ENCODE measurements at regions of chrX and their contacts with region 1.

Region 1: GRCh38 chrX:1391707-1392375 is at the start of gene SLC25A6:
- DNase-seq: peak; percentile 98 to 100 (median 99)
- ATAC-seq: peak; percentile 95
- H3K4me3 ChIP-seq: peak within 1 kb of the TSS; percentile 84
- H3K4me3 Mint-ChIP-seq: peak within 1 kb of the TSS; percentile 92
- H3K27ac ChIP-seq: peak within 1 kb of the TSS; percentile 87 to 98
- H3K27ac Mint-ChIP-seq: peak within 1 kb of the TSS; percentile 85
- H3K4me1 ChIP-seq: peaks cover 48% of the 10 kb centered on the region
- H3K4me1 Mint-ChIP-seq: peaks cover 42% of the 10 kb centered on the region
- H3K27me3 ChIP-seq: peaks cover 0 to 2% of the 10 kb centered on the region in 2 experiments
- H3K27me3 Mint-ChIP-seq: no peaks in the 10 kb centered on the region
- CTCF ChIP-seq: peak; percentile 28
- total RNA-seq, gene SLC25A6: 338 to 340 TPM

Region 2: DNA sequence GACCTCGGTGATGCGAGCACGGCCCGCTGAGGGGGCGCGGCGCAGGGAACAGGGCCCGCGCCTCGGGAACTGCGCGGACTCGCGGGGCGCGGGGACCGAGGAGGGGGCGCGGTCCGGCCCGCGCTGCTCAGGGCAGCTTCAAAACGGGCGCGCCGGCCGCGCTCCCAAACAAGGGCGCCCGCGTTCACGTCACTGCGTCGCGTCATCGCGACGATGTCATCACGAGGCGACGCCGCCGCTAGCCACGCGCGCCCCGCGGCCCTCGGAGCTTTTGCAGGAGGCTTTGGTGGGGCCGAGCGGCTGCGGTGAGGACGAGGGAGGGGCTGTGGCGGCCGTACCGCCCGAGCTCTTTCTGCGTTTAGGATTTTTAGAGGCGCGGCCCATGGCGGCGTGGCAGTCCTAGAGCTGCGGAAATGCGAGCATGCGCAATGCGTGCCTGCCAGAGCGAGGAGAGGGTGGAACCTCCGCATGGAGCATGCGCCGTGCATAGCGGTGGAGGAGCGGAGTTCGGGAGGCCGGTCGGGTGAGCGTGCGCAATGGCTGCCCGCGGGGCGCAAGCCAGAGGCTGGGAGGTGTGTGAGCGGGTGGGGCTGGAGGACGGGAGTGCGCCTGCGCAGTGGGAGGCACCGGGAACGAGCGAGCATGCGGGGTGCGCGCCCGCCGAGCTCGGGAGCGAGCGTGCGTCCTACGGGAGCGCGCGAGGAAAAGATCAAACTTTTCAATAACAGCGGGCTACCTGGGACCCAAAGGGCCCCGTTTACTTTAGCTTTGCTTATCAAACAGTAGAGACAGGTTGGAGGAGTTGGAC is 1004.9 kb before region 1 on chrX and contains the start of gene PPP2R3B:
- CTCF ChIA-PET with region 1: no interaction called
- POLR2A ChIA-PET with region 1: no interaction called
- intact Hi-C with region 1: loop called in 1 of 2 experiments (anchors 10 kb)
- DNase-seq: peak; percentile 95 to 100 (median 99)
- ATAC-seq: peak; percentile 93
- H3K4me3 ChIP-seq: peak within 1 kb of the TSS; percentile 82
- H3K4me3 Mint-ChIP-seq: peak within 1 kb of the TSS; percentile 87
- H3K27ac ChIP-seq: peak within 1 kb of the TSS; percentile 100
- H3K27ac Mint-ChIP-seq: peak within 1 kb of the TSS; percentile 94
- H3K4me1 ChIP-seq: peaks cover 16% of the 10 kb centered on the region
- H3K4me1 Mint-ChIP-seq: peaks cover 9% of the 10 kb centered on the region
- H3K27me3 ChIP-seq: no peaks in the 10 kb centered on the region
- H3K27me3 Mint-ChIP-seq: no peaks in the 10 kb centered on the region
- CTCF ChIP-seq: no peak
- total RNA-seq, gene PPP2R3B: 12.1 to 14.0 TPM

Region 3: DNA sequence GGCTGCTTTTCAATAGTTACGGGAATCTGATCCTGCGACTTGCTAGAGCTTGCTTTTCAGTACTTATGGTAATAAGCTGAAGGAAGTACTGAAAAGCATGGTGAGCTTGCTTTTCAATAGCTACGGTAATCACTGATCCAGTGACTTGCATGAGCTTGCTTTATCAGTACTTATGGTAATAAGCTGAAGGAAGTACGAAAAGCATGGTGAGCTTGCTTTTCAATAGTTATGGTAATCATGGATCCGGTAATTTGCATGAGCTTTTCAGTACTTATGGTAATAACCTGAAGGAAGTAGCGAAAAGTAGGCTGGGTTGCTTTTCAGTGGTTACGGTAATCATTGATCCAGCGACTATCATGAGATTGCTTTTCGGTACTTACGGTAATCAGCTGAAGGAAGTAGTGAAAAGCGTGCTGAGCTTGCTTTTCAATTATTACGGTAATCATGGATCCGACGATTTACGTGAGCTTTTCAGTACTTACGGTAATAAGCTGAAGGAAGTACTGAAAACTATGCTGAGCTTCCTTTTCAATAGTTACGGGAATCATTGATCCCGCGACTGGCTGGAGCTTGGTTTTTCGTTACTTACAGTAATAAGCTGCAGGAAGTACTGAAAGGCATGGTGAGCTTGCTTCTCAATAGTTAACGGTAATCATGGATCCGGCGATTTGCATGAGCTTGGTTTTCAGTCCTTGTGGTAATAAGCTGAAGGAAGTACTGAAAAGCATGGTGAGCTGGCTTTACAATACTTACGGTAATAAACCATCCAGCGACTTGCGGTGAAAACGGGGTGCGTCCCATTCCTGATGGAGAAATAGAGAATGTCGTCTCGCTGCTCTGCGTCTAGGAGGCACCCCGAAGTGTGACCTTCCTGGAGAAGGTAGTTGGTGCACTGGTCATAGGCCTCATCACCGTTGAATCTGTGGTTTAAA is 185.9 kb before region 1 on chrX:
- CTCF ChIA-PET with region 1: no interaction called
- POLR2A ChIA-PET with region 1: no interaction called
- intact Hi-C with region 1: loop called in 1 of 2 experiments (anchors 5 kb)
- DNase-seq: peak in 10 of 14 experiments; percentile 5 to 82 (median 28)
- ATAC-seq: peak; percentile 68
- H3K4me3 ChIP-seq: peak overlapping the region; percentile 53
- H3K4me3 Mint-ChIP-seq: peak overlapping the region; percentile 78
- H3K27ac ChIP-seq: no peak overlapping the region
- H3K27ac Mint-ChIP-seq: no peak overlapping the region
- H3K4me1 ChIP-seq: peaks cover 37% of the 10 kb centered on the region
- H3K4me1 Mint-ChIP-seq: peaks cover 32% of the 10 kb centered on the region
- H3K27me3 ChIP-seq: no peaks in the 10 kb centered on the region
- H3K27me3 Mint-ChIP-seq: no peaks in the 10 kb centered on the region
- CTCF ChIP-seq: no peak

Region 4: DNA sequence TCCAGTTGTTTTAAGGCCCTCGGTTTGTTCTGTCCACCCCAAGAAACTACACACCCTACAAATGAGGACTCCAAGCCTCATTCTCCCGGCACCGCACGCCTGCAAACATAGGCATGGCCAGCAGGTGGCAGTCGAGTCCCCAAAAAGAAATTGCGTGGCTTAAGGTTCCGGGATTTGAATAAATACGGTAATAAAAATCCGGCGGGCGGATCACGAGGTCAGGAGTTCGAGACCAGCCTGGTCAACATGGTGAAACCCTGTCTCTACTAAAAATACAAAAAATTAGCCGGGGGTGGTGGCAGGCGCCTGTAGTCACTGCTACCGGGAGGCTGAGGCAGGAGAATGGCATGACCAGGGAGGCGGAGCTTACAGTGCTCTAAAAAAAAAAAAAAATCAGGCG is 145.0 kb before region 1 on chrX:
- CTCF ChIA-PET with region 1: no interaction called
- POLR2A ChIA-PET with region 1: no interaction called
- intact Hi-C with region 1: loop called in 1 of 2 experiments (anchors 5 kb)
- DNase-seq: peak; percentile 59 to 90 (median 80)
- ATAC-seq: peak; percentile 74
- H3K4me3 ChIP-seq: no peak overlapping the region
- H3K4me3 Mint-ChIP-seq: peak overlapping the region; percentile 62
- H3K27ac ChIP-seq: no peak overlapping the region
- H3K27ac Mint-ChIP-seq: peak overlapping the region; percentile 15
- H3K4me1 ChIP-seq: peaks cover 49% of the 10 kb centered on the region
- H3K4me1 Mint-ChIP-seq: peaks cover 37% of the 10 kb centered on the region
- H3K27me3 ChIP-seq: no peaks in the 10 kb centered on the region
- H3K27me3 Mint-ChIP-seq: no peaks in the 10 kb centered on the region
- CTCF ChIP-seq: peak; percentile 81

Region 5: GRCh38 chrX:1380672-1381233 is 11.1 kb before region 1 on chrX:
- CTCF ChIA-PET with region 1: no interaction called
- POLR2A ChIA-PET with region 1: no interaction called
- intact Hi-C with region 1: no loop called
- DNase-seq: peak in 1 of 14 experiments; percentile 24
- ATAC-seq: no peak
- H3K4me3 ChIP-seq: no peak overlapping the region
- H3K4me3 Mint-ChIP-seq: no peak overlapping the region
- H3K27ac ChIP-seq: no peak overlapping the region
- H3K27ac Mint-ChIP-seq: no peak overlapping the region
- H3K4me1 ChIP-seq: peaks cover 9% of the 10 kb centered on the region
- H3K4me1 Mint-ChIP-seq: no peaks in the 10 kb centered on the region
- H3K27me3 ChIP-seq: no peaks in the 10 kb centered on the region
- H3K27me3 Mint-ChIP-seq: no peaks in the 10 kb centered on the region
- CTCF ChIP-seq: no peak

Region 6: GRCh38 chrX:1411291-1411720 is 19.5 kb after region 1 on chrX:
- CTCF ChIA-PET with region 1: no interaction called
- POLR2A ChIA-PET with region 1: no interaction called
- intact Hi-C with region 1: no loop called
- DNase-seq: peak in 1 of 14 experiments; percentile 19
- ATAC-seq: no peak
- H3K4me3 ChIP-seq: no peak overlapping the region
- H3K4me3 Mint-ChIP-seq: no peak overlapping the region
- H3K27ac ChIP-seq: no peak overlapping the region
- H3K27ac Mint-ChIP-seq: no peak overlapping the region
- H3K4me1 ChIP-seq: no peaks in the 10 kb centered on the region
- H3K4me1 Mint-ChIP-seq: no peaks in the 10 kb centered on the region
- H3K27me3 ChIP-seq: no peaks in the 10 kb centered on the region
- H3K27me3 Mint-ChIP-seq: no peaks in the 10 kb centered on the region
- CTCF ChIP-seq: no peak

Region 7: DNA sequence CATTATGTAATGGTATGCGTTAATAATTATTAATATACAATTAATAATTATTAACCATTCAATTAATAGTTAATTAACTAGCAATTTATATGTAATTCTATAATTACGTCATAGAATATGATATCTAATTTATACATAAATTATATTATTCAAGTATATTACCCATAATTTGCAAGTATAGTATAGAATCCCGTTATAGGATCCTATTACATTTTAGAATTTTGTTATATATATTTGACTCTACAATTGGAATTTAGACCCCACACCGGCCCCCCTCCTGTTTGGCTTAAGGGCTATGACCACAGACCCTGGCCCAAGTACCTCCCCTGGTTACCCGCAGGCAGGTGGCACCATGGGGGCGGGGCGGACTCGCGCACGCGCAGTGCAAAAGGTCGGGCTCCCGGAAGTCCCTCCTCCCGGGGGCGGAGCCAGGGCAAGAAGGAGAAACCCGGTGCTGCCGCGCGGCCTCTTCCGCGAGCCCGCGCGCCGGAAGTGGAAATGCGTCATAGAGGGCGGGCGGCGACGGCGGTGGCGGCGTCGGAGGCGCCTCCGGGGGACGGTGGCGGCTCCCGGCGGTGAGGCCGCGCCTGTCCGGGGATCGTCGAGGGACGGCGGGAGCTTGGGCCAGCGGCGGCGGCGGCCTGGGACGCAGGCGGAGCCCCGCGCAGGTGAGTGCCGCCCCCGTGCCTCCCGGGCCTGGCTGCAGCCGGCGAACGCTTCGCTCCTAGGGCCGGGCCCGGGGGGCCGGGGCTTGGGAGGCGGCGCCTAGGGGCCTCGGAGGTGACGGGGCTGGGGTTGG is 199.5 kb after region 1 on chrX and contains the start of gene AKAP17A:
- CTCF ChIA-PET with region 1: no interaction called
- POLR2A ChIA-PET with region 1: no interaction called
- intact Hi-C with region 1: loop called (anchors 2 to 5 kb)
- DNase-seq: peak; percentile 93 to 100 (median 98)
- ATAC-seq: peak; percentile 89
- H3K4me3 ChIP-seq: peak within 1 kb of the TSS; percentile 80
- H3K4me3 Mint-ChIP-seq: peak within 1 kb of the TSS; percentile 95
- H3K27ac ChIP-seq: peak within 1 kb of the TSS; percentile 53 to 55
- H3K27ac Mint-ChIP-seq: peak within 1 kb of the TSS; percentile 90
- H3K4me1 ChIP-seq: peaks cover 42% of the 10 kb centered on the region
- H3K4me1 Mint-ChIP-seq: peaks cover 43% of the 10 kb centered on the region
- H3K27me3 ChIP-seq: no peaks in the 10 kb centered on the region
- H3K27me3 Mint-ChIP-seq: no peaks in the 10 kb centered on the region
- CTCF ChIP-seq: no peak
- total RNA-seq, gene AKAP17A: 143 to 149 TPM

Region 8: DNA sequence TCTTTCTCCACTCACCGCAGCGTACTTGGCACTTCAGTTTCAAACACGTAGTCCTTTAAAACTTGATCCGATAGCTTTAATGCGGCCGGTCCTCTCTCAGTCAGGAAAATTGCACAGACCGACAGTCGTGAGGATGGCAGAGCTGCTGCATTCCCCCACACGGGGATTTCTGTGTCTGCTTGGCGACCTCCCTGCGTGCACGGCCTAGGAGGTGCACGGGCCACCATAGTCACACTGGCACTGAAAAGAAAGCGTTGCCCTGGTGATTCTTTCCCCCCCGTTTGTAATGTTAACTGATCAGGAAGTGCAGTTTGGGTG is 209.9 kb after region 1 on chrX:
- CTCF ChIA-PET with region 1: no interaction called
- POLR2A ChIA-PET with region 1: no interaction called
- intact Hi-C with region 1: no loop called
- DNase-seq: peak in 1 of 14 experiments; percentile 16
- ATAC-seq: no peak
- H3K4me3 ChIP-seq: no peak overlapping the region
- H3K4me3 Mint-ChIP-seq: peak overlapping the region; percentile 72
- H3K27ac ChIP-seq: no peak overlapping the region
- H3K27ac Mint-ChIP-seq: peak overlapping the region; percentile 42
- H3K4me1 ChIP-seq: peaks cover 8% of the 10 kb centered on the region
- H3K4me1 Mint-ChIP-seq: no peaks in the 10 kb centered on the region
- H3K27me3 ChIP-seq: no peaks in the 10 kb centered on the region
- H3K27me3 Mint-ChIP-seq: no peaks in the 10 kb centered on the region
- CTCF ChIP-seq: no peak

Region 9: GRCh38 chrX:2608638-2609430 is 1217.0 kb after region 1 on chrX:
- CTCF ChIA-PET with region 1: no interaction called
- POLR2A ChIA-PET with region 1: no interaction called
- intact Hi-C with region 1: loop called in 1 of 2 experiments (anchors 2 kb)
- DNase-seq: peak; percentile 73 to 94 (median 84)
- ATAC-seq: peak; percentile 94
- H3K4me3 ChIP-seq: peak overlapping the region; percentile 96
- H3K4me3 Mint-ChIP-seq: peak overlapping the region; percentile 98
- H3K27ac ChIP-seq: peak overlapping the region; percentile 14 to 43
- H3K27ac Mint-ChIP-seq: peak overlapping the region; percentile 82
- H3K4me1 ChIP-seq: peaks cover 34% of the 10 kb centered on the region
- H3K4me1 Mint-ChIP-seq: peaks cover 63% of the 10 kb centered on the region
- H3K27me3 ChIP-seq: no peaks in the 10 kb centered on the region
- H3K27me3 Mint-ChIP-seq: no peaks in the 10 kb centered on the region
- CTCF ChIP-seq: no peak

Region 10: DNA sequence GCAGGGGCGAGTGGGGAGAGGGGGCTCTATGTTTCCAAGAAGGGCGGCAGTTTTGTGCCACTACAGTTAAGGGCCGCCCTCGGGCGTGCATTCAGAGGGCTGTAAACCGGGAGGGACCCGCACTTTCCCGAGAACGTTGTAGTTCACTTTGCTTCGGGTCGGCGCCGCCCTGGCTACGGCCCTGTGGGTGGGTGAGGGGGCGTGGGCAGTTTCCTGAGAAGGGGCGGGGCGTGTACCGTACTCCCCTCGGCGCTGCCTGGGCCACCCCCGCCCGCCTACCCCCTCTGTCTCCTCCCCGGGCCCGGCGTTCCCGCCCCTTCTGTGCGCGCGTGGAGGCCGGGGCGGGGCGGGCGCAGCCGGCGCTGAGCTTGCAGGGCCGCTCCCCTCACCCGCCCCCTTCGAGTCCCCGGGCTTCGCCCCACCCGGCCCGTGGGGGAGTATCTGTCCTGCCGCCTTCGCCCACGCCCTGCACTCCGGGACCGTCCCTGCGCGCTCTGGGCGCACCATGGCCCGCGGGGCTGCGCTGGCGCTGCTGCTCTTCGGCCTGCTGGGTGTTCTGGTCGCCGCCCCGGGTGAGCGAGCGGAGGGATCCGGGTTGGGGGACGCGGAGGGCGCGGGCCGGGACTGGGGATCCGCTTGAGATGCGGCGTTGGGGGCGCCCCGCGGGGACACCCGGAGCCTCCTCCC is 1299.2 kb after region 1 on chrX and contains the start of gene CD99:
- CTCF ChIA-PET with region 1: no interaction called
- POLR2A ChIA-PET with region 1: no interaction called
- intact Hi-C with region 1: loop called in 1 of 2 experiments (anchors 10 kb)
- DNase-seq: peak; percentile 79 to 96 (median 89)
- ATAC-seq: peak; percentile 85
- H3K4me3 ChIP-seq: peak within 1 kb of the TSS; percentile 96
- H3K4me3 Mint-ChIP-seq: peak within 1 kb of the TSS; percentile 95
- H3K27ac ChIP-seq: peak within 1 kb of the TSS; percentile 61 to 62
- H3K27ac Mint-ChIP-seq: peak within 1 kb of the TSS; percentile 83
- H3K4me1 ChIP-seq: peaks cover 47% of the 10 kb centered on the region
- H3K4me1 Mint-ChIP-seq: peaks cover 40% of the 10 kb centered on the region
- H3K27me3 ChIP-seq: no peaks in the 10 kb centered on the region
- H3K27me3 Mint-ChIP-seq: no peaks in the 10 kb centered on the region
- CTCF ChIP-seq: no peak
- total RNA-seq, gene CD99: 170 to 184 TPM